ENCODE measurements at regions of chr18 and their contacts with region 1.

Region 1: GRCh38 chr18:37476182-37476581 is 89.4 kb downstream of the CELF4 start:
- DNase-seq: peak; percentile 2
- H3K4me3 Mint-ChIP-seq: no peak overlapping the region
- H3K27ac Mint-ChIP-seq: no peak overlapping the region
- H3K4me1 Mint-ChIP-seq: no peaks in the 10 kb centered on the region
- H3K27me3 Mint-ChIP-seq: no peaks in the 10 kb centered on the region

Region 2: GRCh38 chr18:36942264-36942663 is 533.9 kb before region 1 on chr18:
- intact Hi-C with region 1: loop called (anchors 2 kb)
- DNase-seq: peak; percentile 1
- H3K4me3 Mint-ChIP-seq: no peak overlapping the region
- H3K27ac Mint-ChIP-seq: no peak overlapping the region
- H3K4me1 Mint-ChIP-seq: no peaks in the 10 kb centered on the region
- H3K27me3 Mint-ChIP-seq: no peaks in the 10 kb centered on the region

Region 3: GRCh38 chr18:37385846-37386778 is 90.1 kb before region 1 on chr18:
- intact Hi-C with region 1: loop called (anchors 5 kb)
- DNase-seq: no peak
- H3K4me3 Mint-ChIP-seq: no peak overlapping the region
- H3K27ac Mint-ChIP-seq: no peak overlapping the region
- H3K4me1 Mint-ChIP-seq: no peaks in the 10 kb centered on the region
- H3K27me3 Mint-ChIP-seq: peaks cover 9% of the 10 kb centered on the region

Region 4: GRCh38 chr18:37445368-37445767 is 30.8 kb before region 1 on chr18:
- intact Hi-C with region 1: loop called (anchors 2 kb)
- DNase-seq: no peak
- H3K4me3 Mint-ChIP-seq: no peak overlapping the region
- H3K27ac Mint-ChIP-seq: no peak overlapping the region
- H3K4me1 Mint-ChIP-seq: peaks cover 6% of the 10 kb centered on the region
- H3K27me3 Mint-ChIP-seq: peaks cover 3% of the 10 kb centered on the region

Measured in activated T-helper 1 cell treated with anti-CD3 and anti-CD28 coated beads, Interleukin-12 subunit alpha, Interleukin-12 subunit beta, Interleukin-2, Interleukin-4 antibody, amounts not matched to agents 30 ng/mL and 10 ng/mL and 1 ng/mL, durations not matched to agents 14 hours and 24 hours and 36 hours (primary cell).